ENCODE measurements at regions of chr2 and their contacts with region 1.

Region 1: GRCh38 chr2:65264821-65265670 is 37.4 kb downstream of the ACTR2 start:
- DNase-seq: no peak
- H3K4me3 Mint-ChIP-seq: no peak overlapping the region
- H3K27ac Mint-ChIP-seq: no peak overlapping the region
- H3K4me1 Mint-ChIP-seq: peaks cover 12% of the 10 kb centered on the region
- H3K27me3 Mint-ChIP-seq: no peaks in the 10 kb centered on the region

Region 2: GRCh38 chr2:65045651-65046050 is 219.4 kb before region 1 on chr2:
- CTCF ChIA-PET with region 1: no interaction called
- POLR2A ChIA-PET with region 1: no interaction called
- intact Hi-C with region 1: no loop called
- DNase-seq: no peak
- H3K4me3 Mint-ChIP-seq: no peak overlapping the region
- H3K27ac Mint-ChIP-seq: no peak overlapping the region
- H3K4me1 Mint-ChIP-seq: no peaks in the 10 kb centered on the region
- H3K27me3 Mint-ChIP-seq: no peaks in the 10 kb centered on the region

Region 3: DNA sequence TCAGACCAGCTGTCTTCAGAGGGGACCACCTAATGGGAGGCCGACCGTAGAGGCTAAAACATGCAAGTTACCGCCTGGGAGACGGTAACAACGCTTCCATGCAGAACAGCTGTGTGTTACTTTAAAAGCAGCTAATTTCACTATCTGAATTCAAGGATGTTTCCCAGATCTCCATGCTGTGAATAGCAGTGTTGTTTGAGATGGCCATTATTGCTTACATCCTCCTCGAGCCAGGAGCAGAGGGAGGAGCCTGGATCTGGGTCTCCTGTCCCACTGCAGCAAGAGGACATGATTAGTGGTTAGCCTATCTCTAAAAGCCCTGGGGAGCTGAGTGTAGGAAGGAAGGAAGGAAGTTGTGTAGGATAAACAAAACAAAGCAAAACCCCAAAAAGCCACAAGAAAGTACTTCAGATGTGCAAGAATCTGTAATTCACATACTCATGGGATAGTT is 13.5 kb after region 1 on chr2:
- CTCF ChIA-PET with region 1: interaction called, 10 read pairs
- POLR2A ChIA-PET with region 1: no interaction called
- intact Hi-C with region 1: no loop called
- DNase-seq: no peak
- H3K4me3 Mint-ChIP-seq: no peak overlapping the region
- H3K27ac Mint-ChIP-seq: no peak overlapping the region
- H3K4me1 Mint-ChIP-seq: peaks cover 14% of the 10 kb centered on the region
- H3K27me3 Mint-ChIP-seq: no peaks in the 10 kb centered on the region

Region 4: GRCh38 chr2:65554765-65555591 is 289.9 kb after region 1 on chr2:
- CTCF ChIA-PET with region 1: interaction called, 5 read pairs
- POLR2A ChIA-PET with region 1: no interaction called
- intact Hi-C with region 1: loop called (anchors 1 kb)
- DNase-seq: peak; percentile 58
- H3K4me3 Mint-ChIP-seq: no peak overlapping the region
- H3K27ac Mint-ChIP-seq: no peak overlapping the region
- H3K4me1 Mint-ChIP-seq: peaks cover 11% of the 10 kb centered on the region
- H3K27me3 Mint-ChIP-seq: peaks cover 6% of the 10 kb centered on the region

Region 5: GRCh38 chr2:65576861-65577601 is 312.0 kb after region 1 on chr2:
- CTCF ChIA-PET with region 1: interaction called, 5 read pairs
- POLR2A ChIA-PET with region 1: no interaction called
- intact Hi-C with region 1: loop called (anchors 1 kb)
- DNase-seq: no peak
- H3K4me3 Mint-ChIP-seq: no peak overlapping the region
- H3K27ac Mint-ChIP-seq: no peak overlapping the region
- H3K4me1 Mint-ChIP-seq: peaks cover 3% of the 10 kb centered on the region
- H3K27me3 Mint-ChIP-seq: peaks cover 2% of the 10 kb centered on the region